A673 (cell line): ENCODE measurements at regions of chr2 and their contacts with region 1.

Region 1: GRCh38 chr2:12076810-12077209 is 330.4 kb downstream of the LPIN1 start:
- DNase-seq: peak; percentile 37
- H3K4me3 ChIP-seq: no peak overlapping the region
- H3K27ac ChIP-seq: no peak overlapping the region
- H3K4me1 ChIP-seq: no peaks in the 10 kb centered on the region
- H3K27me3 ChIP-seq: no peaks in the 10 kb centered on the region
- CTCF ChIP-seq: no peak

Region 2: DNA sequence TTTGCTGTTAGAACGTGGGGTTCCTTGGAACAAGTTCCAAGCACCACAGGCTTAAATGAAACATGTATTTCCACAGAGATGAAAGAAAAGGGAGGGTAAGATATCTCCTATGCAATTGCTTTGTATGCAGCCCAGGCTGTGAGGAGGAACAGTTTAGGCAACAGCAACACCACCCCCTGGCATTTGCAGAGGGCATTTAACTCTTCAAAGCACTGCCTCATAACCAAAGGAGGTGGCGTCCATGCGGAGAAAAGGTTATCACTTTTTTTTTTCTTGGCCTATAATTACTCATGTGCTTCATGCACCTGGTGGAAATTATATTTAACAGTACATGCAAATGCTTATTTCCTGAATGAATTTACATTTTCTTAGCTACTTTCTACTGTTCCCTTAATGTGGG is 44.4 kb before region 1 on chr2:
- CTCF ChIA-PET with region 1: no interaction called
- POLR2A ChIA-PET with region 1: no interaction called
- intact Hi-C with region 1: no loop called
- DNase-seq: no peak
- H3K4me3 ChIP-seq: no peak overlapping the region
- H3K27ac ChIP-seq: no peak overlapping the region
- H3K4me1 ChIP-seq: no peaks in the 10 kb centered on the region
- H3K27me3 ChIP-seq: no peaks in the 10 kb centered on the region
- CTCF ChIP-seq: peak; percentile 23; the same call in 1 of the 2 replicates

Region 3: DNA sequence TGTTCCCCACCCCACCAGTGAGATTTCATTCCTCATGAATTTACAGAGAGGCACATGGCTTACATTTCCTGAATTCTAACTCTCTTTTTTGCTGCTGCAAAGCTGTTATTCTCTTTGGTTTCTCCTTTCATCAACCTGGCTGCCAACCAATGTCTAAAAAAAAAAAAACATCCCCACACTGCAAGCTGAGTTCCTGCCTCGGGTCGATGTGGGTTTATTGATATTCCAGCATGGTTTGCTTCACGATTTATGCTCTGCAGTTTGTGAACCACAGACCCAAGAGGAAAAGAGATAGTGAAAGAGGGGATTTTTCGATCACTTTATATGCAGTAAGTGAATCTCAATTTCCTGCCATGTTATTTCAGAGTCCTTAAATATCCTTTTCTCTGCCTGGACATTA is 33.3 kb after region 1 on chr2:
- CTCF ChIA-PET with region 1: no interaction called
- POLR2A ChIA-PET with region 1: interaction called, 11 read pairs
- intact Hi-C with region 1: no loop called
- DNase-seq: no peak
- H3K4me3 ChIP-seq: no peak overlapping the region
- H3K27ac ChIP-seq: no peak overlapping the region
- H3K4me1 ChIP-seq: peaks cover 13% of the 10 kb centered on the region
- H3K27me3 ChIP-seq: no peaks in the 10 kb centered on the region
- CTCF ChIP-seq: no peak

Region 4: DNA sequence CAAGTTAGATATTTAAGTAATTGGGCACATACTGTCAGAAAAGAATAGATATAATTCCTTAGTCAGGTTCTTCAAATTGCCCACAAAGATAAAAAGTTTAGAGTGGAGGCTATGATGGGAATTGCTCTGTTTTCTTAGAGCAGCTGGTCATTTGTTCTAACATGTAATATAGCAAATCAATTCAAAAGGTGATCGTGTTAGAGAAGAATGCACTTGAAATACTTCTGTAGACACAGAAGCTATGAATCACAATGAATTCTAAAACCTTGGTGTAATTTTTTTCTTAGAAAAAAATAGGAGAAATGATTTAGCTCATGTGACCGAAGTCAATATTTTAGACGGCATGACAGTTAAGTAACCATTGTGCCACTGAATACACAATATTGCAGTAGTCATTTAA is 1637.7 kb after region 1 on chr2:
- CTCF ChIA-PET with region 1: no interaction called
- POLR2A ChIA-PET with region 1: no interaction called
- intact Hi-C with region 1: no loop called
- DNase-seq: no peak
- H3K4me3 ChIP-seq: no peak overlapping the region
- H3K27ac ChIP-seq: no peak overlapping the region
- H3K4me1 ChIP-seq: no peaks in the 10 kb centered on the region
- H3K27me3 ChIP-seq: no peaks in the 10 kb centered on the region
- CTCF ChIP-seq: no peak